Breast epithelium (tissue), 4 donors: ENCODE measurements at regions of chr1 and their contacts with region 1.

Region 1: DNA sequence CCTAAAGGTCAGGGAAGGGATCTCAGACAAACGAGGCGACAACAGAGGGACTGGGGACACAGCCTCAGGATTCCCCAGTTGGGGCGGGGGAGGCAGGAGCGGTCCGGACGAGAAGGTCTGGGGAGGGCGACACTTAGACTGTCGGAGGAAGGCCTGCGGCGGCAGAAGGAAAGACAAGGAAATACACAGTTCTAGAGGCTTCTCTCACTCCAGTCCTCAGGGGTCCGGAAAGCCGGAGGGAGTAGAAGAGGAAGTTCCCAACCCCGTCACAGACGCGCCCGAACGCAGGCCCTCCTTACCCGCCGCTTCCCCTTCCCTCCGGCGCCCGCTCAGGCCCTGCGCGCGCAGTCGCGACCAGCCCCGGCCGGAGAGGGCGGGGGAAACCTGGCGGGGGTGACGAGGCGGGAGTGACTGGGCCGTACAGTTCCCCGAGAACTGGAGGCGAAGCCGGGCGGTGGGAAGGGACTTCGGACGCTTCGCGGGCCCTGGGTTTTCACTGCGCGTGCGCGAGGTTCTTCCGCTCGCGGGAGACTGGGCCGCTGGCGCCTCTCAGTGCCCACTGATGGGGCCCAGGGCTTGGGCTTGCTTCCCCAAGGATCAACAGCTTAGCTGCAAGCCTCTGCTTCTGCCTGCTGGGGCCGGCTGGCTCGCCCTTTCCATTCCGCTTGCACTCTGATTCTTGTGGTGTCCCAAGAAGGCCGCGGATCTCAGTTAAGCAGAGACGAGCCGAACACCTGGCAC is at the start of gene IPP:
- DNase-seq: peak; percentile 92 to 95
- H3K4me3 ChIP-seq: peak within 1 kb of the TSS; percentile 62 to 77 (median 65)
- H3K27ac ChIP-seq: peak within 1 kb of the TSS; percentile 95 to 97
- H3K4me1 ChIP-seq: peaks cover 0 to 4% of the 10 kb centered on the region in 2 donors
- H3K27me3 ChIP-seq: no peaks in the 10 kb centered on the region
- CTCF ChIP-seq: peak in 1 of 3 donors; percentile 13
- POLR2A ChIP-seq: peak; percentile 87
- total RNA-seq, gene IPP: 10.5 to 15.4 (median 11.4) TPM

Region 2: DNA sequence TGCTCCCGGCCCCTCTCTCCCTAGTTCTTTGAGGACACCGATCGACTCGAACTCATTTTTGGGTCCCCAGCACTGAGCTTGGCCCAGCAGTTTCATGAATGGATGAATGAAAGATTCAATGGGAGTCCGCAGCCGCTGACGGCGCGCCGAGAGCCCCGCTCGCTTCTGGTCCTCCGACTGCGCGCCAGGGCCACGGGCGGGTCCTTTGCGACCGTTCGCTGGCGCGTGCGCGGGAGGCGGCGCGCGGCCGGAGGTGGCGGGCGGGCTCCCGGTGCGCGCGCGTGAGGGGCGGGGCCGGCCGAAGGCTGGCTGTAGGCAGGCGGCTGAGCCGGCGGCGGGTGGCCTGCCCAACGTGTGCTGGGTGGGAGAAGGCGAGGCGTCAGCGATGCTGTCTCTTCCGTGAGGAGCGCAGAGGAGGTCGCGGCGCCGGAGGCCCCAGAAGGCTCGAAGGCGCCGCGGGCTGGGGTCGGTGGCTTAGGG is 52.9 kb after region 1 on chr1 and contains the start of gene MAST2:
- intact Hi-C with region 1: loop called (anchors 10 kb)
- DNase-seq: peak; percentile 73 to 81
- H3K4me3 ChIP-seq: peak within 1 kb of the TSS; percentile 54 to 70 (median 58)
- H3K27ac ChIP-seq: peak within 1 kb of the TSS; percentile 79 to 91
- H3K4me1 ChIP-seq: peaks cover 0 to 14% of the 10 kb centered on the region in 2 donors
- H3K27me3 ChIP-seq: no peaks in the 10 kb centered on the region
- CTCF ChIP-seq: no peak
- POLR2A ChIP-seq: no peak
- total RNA-seq, gene MAST2: 28.0 to 34.4 (median 31.6) TPM